Aorta (tissue), 5 donors: ENCODE measurements at regions of chr1 and their contacts with region 1.

Region 1: DNA sequence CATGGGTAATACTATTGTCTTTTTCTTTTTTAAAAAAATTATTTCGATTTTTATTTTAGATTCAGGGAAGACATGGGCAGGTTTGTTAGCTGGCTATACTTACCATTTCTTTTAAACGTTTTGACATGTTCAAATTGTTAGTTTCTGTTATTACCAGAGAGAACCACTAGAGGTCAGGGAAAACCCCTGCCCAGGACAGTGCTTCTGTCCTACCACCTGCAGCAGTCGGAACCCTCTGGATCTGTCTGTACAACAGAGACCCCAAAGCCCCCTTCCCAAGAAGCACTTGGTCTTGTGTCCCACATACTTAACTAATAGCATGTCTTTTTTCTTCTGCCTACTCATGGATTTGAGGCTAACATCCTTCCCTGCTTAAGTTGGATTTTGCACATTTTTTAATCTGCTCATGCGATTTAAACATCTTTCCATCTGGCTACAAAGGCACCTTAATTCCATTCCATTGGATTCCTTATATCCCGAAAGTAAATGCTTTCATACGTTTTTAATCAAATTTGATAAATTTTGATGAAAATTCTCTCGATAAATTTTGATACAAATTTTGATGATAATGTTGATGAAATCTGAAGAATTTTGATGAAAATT is 10.0 kb upstream of the C1orf115 start:
- DNase-seq: no peak
- ATAC-seq: peak; percentile 66
- H3K4me3 ChIP-seq: no peak overlapping the region
- H3K27ac ChIP-seq: no peak overlapping the region
- H3K4me1 ChIP-seq: no peaks in the 10 kb centered on the region
- H3K27me3 ChIP-seq: no peaks in the 10 kb centered on the region

Region 2: GRCh38 chr1:220544901-220545303 is 135.3 kb before region 1 on chr1:
- intact Hi-C with region 1: no loop called
- DNase-seq: no peak
- ATAC-seq: no peak
- H3K4me3 ChIP-seq: no peak overlapping the region
- H3K27ac ChIP-seq: no peak overlapping the region
- H3K4me1 ChIP-seq: no peaks in the 10 kb centered on the region
- H3K27me3 ChIP-seq: no peaks in the 10 kb centered on the region

Region 3: DNA sequence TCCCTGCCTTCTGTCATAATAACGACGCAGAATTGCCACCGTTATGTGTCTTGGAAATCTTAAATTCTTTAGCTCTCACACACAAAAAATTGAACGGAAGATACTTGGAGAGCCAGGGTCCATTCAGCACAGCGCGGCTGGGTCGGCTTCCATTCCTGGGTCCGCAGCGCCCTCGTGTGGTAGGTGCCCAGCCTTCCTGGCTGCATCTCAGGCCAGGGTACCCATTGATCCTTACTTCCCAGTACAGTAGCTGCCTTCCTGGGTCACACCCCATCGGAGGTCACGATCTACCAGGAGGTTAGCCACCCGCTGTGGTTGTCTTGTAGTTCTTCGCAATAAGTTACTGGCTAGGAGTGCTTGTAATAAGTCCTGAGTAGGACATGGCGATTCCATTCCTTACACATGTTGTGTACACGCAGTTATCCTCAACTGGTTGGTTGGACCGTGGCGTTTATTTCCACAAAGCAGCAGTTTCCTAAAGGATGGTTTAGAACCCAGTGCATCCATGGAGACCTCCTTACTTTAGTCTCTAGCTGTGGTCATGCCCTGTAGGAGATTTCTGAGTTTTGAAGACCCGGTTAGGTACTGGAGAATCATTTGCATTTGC is 96.6 kb after region 1 on chr1:
- intact Hi-C with region 1: loop called (anchors 2 kb)
- DNase-seq: peak; percentile 84 to 96
- ATAC-seq: peak; percentile 92
- H3K4me3 ChIP-seq: no peak overlapping the region
- H3K27ac ChIP-seq: no peak overlapping the region
- H3K4me1 ChIP-seq: no peaks in the 10 kb centered on the region
- H3K27me3 ChIP-seq: no peaks in the 10 kb centered on the region

Region 4: DNA sequence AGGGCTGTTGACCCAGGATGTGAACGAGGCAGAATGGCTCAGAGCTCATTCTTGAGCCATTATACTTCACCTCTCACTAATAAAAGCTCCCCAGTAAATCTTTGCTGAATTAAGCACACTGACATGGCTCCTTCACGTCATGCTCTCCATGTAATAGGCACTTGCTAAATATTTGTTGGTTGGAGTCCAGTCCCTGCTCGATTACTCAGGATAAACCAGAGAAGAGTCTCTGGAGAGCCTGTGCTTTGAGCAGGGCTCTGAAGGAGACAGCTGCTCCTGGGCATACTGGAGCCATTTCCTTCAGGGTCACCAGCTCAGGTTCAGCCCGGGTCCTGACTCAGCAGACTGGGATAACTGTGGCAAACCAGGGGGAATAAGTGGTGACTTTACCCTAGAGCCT is 246.0 kb after region 1 on chr1:
- intact Hi-C with region 1: no loop called
- DNase-seq: no peak
- ATAC-seq: no peak
- H3K4me3 ChIP-seq: no peak overlapping the region
- H3K27ac ChIP-seq: no peak overlapping the region
- H3K4me1 ChIP-seq: no peaks in the 10 kb centered on the region
- H3K27me3 ChIP-seq: no peaks in the 10 kb centered on the region